Heart right ventricle (tissue), 16 donors: ENCODE measurements at regions of chr3 and their contacts with region 1.

Region 1: GRCh38 chr3:116051040-116051439 is 394.2 kb downstream of the LSAMP start:
- DNase-seq: no peak
- ATAC-seq: peak in 1 of 8 donors; percentile 53
- H3K4me3 ChIP-seq: no peak overlapping the region
- H3K27ac ChIP-seq: no peak overlapping the region
- H3K4me1 ChIP-seq: peaks cover 0 to 7% (median 0%) of the 10 kb centered on the region in 9 donors
- H3K27me3 ChIP-seq: no peaks in the 10 kb centered on the region
- CTCF ChIP-seq: no peak

Region 2: GRCh38 chr3:116118475-116119169 is 67.6 kb after region 1 on chr3:
- intact Hi-C with region 1: no loop called
- DNase-seq: no peak
- ATAC-seq: no peak
- H3K4me3 ChIP-seq: no peak overlapping the region
- H3K27ac ChIP-seq: no peak overlapping the region
- H3K4me1 ChIP-seq: no peaks in the 10 kb centered on the region
- H3K27me3 ChIP-seq: no peaks in the 10 kb centered on the region
- CTCF ChIP-seq: no peak

Region 3: GRCh38 chr3:116824208-116824607 is 773.2 kb after region 1 on chr3:
- intact Hi-C with region 1: loop called in 1 of 10 experiments (anchors 5 kb)
- DNase-seq: no peak
- ATAC-seq: no peak
- H3K4me3 ChIP-seq: no peak overlapping the region
- H3K27ac ChIP-seq: no peak overlapping the region
- H3K4me1 ChIP-seq: no peaks in the 10 kb centered on the region
- H3K27me3 ChIP-seq: no peaks in the 10 kb centered on the region
- CTCF ChIP-seq: no peak